Ascending aorta (tissue), 2 donors: ENCODE measurements at regions of chr9 and their contacts with region 1.

Region 1: GRCh38 chr9:6305954-6306563 is 22.1 kb upstream of the TPD52L3 start:
- DNase-seq: no peak
- H3K4me3 ChIP-seq: no peak overlapping the region
- H3K27ac ChIP-seq: no peak overlapping the region
- H3K4me1 ChIP-seq: no peaks in the 10 kb centered on the region
- H3K27me3 ChIP-seq: no peaks in the 10 kb centered on the region
- CTCF ChIP-seq: peak; percentile 36 to 65 (median 52)

Region 2: DNA sequence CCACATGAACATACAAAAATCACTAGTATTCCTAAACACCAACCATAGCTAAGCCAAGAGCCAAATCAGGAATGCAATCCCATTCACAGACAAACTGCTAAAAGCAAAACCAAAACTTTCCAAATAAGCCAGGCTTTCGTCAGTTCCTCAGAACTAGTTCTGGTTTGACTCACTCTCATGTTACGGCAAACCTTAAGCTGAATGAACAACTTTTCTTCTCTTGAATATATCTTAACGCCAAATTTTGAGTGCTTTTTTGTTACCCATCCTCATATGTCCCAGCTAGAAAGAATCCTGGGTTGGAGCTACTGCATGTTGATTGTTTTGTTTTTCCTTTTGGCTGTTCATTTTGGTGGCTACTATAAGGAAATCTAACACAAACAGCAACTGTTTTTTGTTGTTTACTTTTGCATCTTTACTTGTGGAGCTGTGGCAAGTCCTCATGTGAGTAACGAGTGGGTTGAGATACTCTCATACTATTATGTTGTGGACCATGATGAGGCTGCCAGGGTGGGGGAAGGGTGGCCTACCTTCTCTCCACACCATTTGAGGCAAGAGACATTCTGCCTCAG is 795.6 kb before region 1 on chr9 and contains the start of gene PDCD1LG2:
- intact Hi-C with region 1: no loop called
- DNase-seq: no peak
- H3K4me3 ChIP-seq: peak within 1 kb of the TSS; percentile 29 to 54
- H3K27ac ChIP-seq: peak within 1 kb of the TSS; percentile 76 to 79
- H3K4me1 ChIP-seq: peaks cover 0 to 4% of the 10 kb centered on the region in 2 donors
- H3K27me3 ChIP-seq: no peaks in the 10 kb centered on the region
- CTCF ChIP-seq: no peak
- total RNA-seq, gene PDCD1LG2: 1.1 TPM

Region 3: DNA sequence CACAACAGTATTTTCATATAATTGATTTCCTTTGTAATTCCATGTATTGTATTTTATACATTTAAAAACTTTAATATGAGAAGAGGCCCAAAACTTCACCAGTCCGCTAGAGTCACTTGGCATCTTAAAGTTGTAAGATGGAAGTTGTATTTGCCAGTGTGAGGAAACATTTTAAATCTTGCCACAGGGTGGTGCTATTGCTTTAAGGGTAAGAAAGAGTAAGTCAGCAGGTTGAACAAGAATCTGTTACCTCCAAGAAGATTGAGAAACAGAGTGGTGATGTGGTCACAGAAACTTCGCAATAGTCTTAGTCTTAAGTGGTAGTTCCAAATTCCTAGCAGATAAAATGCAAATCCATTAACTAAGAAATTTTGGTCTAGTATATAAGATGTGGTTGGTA is 250.8 kb before region 1 on chr9:
- intact Hi-C with region 1: loop called (anchors 1 kb)
- DNase-seq: no peak
- H3K4me3 ChIP-seq: no peak overlapping the region
- H3K27ac ChIP-seq: no peak overlapping the region
- H3K4me1 ChIP-seq: no peaks in the 10 kb centered on the region
- H3K27me3 ChIP-seq: no peaks in the 10 kb centered on the region
- CTCF ChIP-seq: peak in 1 of 3 experiments; percentile 48

Region 4: DNA sequence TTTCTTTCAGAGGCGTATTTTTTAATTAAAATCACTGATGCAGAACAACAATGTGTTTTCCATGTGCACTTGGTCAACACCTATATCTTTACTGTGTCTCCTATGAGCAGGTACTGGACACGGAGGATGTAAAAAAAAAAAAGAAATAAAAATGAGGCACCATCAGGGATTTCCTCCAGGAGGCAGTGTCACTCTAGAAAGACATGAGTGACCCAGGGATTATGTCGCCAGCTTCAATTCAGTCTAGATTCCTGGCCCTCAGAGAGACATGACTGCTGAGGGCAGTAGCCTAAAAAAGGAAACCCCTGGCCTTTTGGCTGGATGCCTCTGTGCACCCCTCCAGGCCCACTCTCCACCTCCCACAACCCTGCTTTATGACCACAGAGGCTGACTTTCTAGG is 108.7 kb before region 1 on chr9:
- intact Hi-C with region 1: loop called (anchors 1 kb)
- DNase-seq: no peak
- H3K4me3 ChIP-seq: no peak overlapping the region
- H3K27ac ChIP-seq: no peak overlapping the region
- H3K4me1 ChIP-seq: no peaks in the 10 kb centered on the region
- H3K27me3 ChIP-seq: no peaks in the 10 kb centered on the region
- CTCF ChIP-seq: peak; percentile 5 to 68 (median 49)

Region 5: DNA sequence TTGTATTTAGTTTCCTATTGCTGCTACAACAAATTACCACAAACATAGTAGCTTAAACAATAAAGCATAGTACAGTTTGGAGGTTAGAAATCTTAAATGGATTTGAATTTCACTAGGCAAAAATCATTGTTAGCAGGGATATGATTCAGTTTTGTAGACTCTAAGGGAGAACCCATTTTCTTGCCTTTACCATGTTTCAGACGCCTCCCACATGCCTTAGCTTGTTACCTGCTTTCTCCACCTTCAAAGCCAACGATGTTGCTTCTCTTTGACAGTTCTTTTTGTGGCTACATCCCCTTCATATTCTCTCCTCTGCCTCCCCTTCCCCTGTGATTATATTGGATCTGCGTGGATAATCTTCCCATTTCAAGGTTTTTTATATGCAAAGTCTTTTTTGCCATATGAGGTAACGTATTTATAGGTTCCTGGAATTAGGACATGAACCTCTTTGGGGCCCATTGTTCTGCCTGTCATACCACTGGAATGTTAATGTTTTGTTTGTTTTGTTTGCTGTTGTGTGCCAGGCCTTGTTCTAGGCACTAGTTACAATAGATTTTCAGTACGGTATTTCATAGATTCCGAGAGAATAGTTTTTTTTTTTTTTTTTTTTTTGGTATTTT is 161.1 kb after region 1 on chr9:
- intact Hi-C with region 1: no loop called
- DNase-seq: no peak
- H3K4me3 ChIP-seq: no peak overlapping the region
- H3K27ac ChIP-seq: no peak overlapping the region
- H3K4me1 ChIP-seq: no peaks in the 10 kb centered on the region
- H3K27me3 ChIP-seq: no peaks in the 10 kb centered on the region
- CTCF ChIP-seq: no peak

Region 6: DNA sequence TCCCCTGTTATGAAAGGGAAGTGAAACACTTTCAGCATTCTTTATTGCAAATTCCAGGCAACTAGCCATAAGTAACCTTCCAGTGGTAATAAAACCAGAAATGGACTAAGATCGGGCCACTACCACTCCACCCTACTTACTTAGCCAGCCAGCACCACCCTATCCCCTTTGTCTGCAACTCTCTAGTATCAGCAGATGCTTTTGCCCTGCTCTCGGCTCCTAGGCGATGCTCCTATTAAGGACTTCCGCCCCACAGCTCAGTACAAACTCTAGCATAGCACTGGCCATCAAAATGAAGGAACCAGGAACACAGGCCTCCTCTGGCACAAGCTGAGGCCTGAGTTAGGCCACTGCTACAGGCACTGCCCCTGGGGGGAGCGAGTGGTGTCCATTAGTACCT is 258.3 kb after region 1 on chr9:
- intact Hi-C with region 1: no loop called
- DNase-seq: peak in 1 of 2 donors; percentile 65
- H3K4me3 ChIP-seq: no peak overlapping the region
- H3K27ac ChIP-seq: peak overlapping the region; percentile 70 to 72
- H3K4me1 ChIP-seq: peaks cover 0 to 14% of the 10 kb centered on the region in 2 donors
- H3K27me3 ChIP-seq: no peaks in the 10 kb centered on the region
- CTCF ChIP-seq: no peak